Gastrocnemius medialis (tissue), 4 donors: ENCODE measurements at regions of chr22 and their contacts with region 1.

Region 1: GRCh38 chr22:23376256-23376655 is 195.9 kb downstream of the BCR start:
- DNase-seq: no peak
- ATAC-seq: no peak
- H3K4me3 ChIP-seq: no peak overlapping the region
- H3K27ac ChIP-seq: no peak overlapping the region
- H3K4me1 ChIP-seq: no peaks in the 10 kb centered on the region
- H3K27me3 ChIP-seq: peaks cover 0 to 4% (median 4%) of the 10 kb centered on the region in 3 donors
- CTCF ChIP-seq: no peak
- POLR2A ChIP-seq: no peak

Region 2: DNA sequence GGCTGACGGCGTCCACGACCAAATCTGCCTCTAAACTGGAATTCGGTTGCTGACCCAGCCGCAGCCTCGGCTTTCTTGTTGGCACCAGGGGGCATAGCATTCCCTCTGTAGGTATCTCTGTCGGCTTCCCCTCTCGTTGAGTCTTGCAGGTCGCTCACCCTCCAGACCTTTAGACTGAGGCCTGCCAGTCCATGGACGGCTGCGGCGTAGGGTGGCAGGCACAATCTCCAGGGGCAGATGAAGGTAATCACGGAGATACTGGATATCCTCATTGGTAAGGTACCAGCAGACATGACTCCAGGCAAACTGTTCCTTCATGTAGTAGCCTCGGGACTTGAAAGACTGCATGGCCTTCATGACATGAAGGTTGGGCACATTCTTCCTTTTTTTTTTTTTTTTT is 53.7 kb before region 1 on chr22:
- in situ Hi-C with region 1: loop called in 1 of 4 experiments (anchors 10 kb)
- intact Hi-C with region 1: no loop called
- DNase-seq: no peak
- ATAC-seq: no peak
- H3K4me3 ChIP-seq: no peak overlapping the region
- H3K27ac ChIP-seq: no peak overlapping the region
- H3K4me1 ChIP-seq: no peaks in the 10 kb centered on the region
- H3K27me3 ChIP-seq: no peaks in the 10 kb centered on the region
- CTCF ChIP-seq: no peak
- POLR2A ChIP-seq: no peak

Region 3: DNA sequence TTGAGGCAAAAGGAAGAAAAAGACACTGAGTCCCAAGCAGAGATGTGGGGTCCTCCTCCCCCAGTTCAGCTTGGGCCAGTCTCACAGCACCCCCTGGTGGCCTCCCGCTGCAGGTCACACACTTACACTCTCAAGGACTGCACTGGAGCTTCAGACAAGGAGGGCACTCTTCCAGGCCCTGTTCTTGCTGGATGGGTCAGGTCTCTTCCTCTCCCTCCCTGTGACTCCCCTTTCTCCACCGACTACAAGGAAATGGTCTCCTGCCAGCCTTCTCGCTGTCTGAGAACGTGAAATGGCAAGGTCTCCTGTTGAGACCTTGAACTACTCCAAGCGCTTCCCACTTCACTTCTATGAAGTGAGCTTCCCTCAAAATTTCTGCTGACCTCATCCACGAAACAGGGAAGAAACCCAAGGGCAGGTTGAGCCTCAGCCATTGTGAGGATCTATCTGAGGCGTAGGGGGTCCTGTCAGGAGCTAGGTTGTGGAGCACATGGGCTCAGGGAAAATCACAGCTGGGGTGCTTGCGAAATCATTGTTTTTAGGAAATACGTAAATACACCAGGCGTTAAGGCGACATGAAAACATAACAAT is 215.0 kb after region 1 on chr22:
- in situ Hi-C with region 1: no loop called
- intact Hi-C with region 1: no loop called
- DNase-seq: no peak
- ATAC-seq: peak in 1 of 2 donors; percentile 30
- H3K4me3 ChIP-seq: no peak overlapping the region
- H3K27ac ChIP-seq: no peak overlapping the region
- H3K4me1 ChIP-seq: no peaks in the 10 kb centered on the region
- H3K27me3 ChIP-seq: no peaks in the 10 kb centered on the region
- CTCF ChIP-seq: peak in 4 of 5 experiments; percentile 36 to 61 (median 50)
- POLR2A ChIP-seq: no peak